ENCODE measurements at regions of chr11 and their contacts with region 1.

Region 1: GRCh38 chr11:46315033-46315738 is 32.1 kb upstream of the DGKZ start:
- DNase-seq: peak; percentile 95
- ATAC-seq: peak; percentile 97
- H3K4me3 Mint-ChIP-seq: no peak overlapping the region
- H3K27ac Mint-ChIP-seq: no peak overlapping the region
- H3K4me1 Mint-ChIP-seq: peaks cover 6% of the 10 kb centered on the region
- H3K27me3 Mint-ChIP-seq: no peaks in the 10 kb centered on the region; the same call in 1 of the 2 replicates
- CTCF ChIP-seq: peak; percentile 98

Region 2: GRCh38 chr11:46198246-46199240 is 116.6 kb before region 1 on chr11:
- CTCF ChIA-PET with region 1: no interaction called
- POLR2A ChIA-PET with region 1: no interaction called
- DNase-seq: no peak
- ATAC-seq: no peak
- H3K4me3 Mint-ChIP-seq: no peak overlapping the region
- H3K27ac Mint-ChIP-seq: no peak overlapping the region
- H3K4me1 Mint-ChIP-seq: peaks cover 12% of the 10 kb centered on the region
- H3K27me3 Mint-ChIP-seq: peaks cover 6% of the 10 kb centered on the region; the same call in 1 of the 2 replicates
- CTCF ChIP-seq: no peak

Region 3: GRCh38 chr11:46247664-46248063 is 67.5 kb before region 1 on chr11:
- CTCF ChIA-PET with region 1: interaction called, 42 read pairs
- POLR2A ChIA-PET with region 1: interaction called, 5 read pairs
- DNase-seq: peak; percentile 75
- ATAC-seq: peak; percentile 48
- H3K4me3 Mint-ChIP-seq: no peak overlapping the region
- H3K27ac Mint-ChIP-seq: peak overlapping the region; percentile 33
- H3K4me1 Mint-ChIP-seq: peaks cover 27% of the 10 kb centered on the region
- H3K27me3 Mint-ChIP-seq: peaks cover 2% of the 10 kb centered on the region; the same call in 1 of the 2 replicates
- CTCF ChIP-seq: peak; percentile 32; the same call in 1 of the 2 replicates

Region 4: DNA sequence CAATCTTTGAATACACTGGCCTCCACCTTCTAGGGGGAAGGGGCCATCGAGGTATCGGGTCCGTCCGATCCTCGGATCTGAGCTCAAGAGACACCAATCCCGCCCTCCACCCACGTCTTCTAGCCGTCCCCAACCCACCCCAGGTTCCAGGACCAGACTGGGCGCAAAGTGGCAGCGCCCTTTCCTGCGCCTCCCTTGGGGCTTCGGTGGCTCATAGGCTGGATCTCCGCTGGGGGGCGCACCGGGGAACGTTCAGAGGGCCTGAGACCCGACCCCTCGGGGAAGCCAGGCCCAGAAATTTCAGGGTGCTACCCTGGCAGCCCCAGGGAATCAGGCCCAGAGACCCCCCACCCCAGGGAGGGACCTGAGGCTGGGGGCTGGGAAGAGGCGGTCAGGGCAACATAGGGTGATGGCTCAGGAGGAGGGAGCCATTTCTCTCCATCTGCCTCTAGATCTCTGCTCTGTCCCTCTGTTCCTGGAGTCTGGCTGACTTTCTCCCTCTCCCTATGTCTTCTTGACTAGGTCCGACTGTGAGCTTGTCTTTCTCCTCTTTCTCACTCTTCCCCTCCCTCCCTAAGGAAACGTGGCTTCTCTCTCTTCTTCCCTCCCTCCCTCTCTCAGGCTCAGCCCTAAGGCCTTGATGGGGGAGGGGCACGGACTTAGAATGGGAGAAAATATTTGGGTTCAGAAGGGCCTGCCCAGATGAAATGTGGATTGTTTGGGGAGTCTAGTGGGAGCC is 36.6 kb before region 1 on chr11:
- CTCF ChIA-PET with region 1: interaction called, 42 read pairs
- POLR2A ChIA-PET with region 1: interaction called, 3 read pairs
- DNase-seq: peak; percentile 83
- ATAC-seq: peak; percentile 68
- H3K4me3 Mint-ChIP-seq: peak overlapping the region; percentile 79
- H3K27ac Mint-ChIP-seq: peak overlapping the region; percentile 26
- H3K4me1 Mint-ChIP-seq: peaks cover 41% of the 10 kb centered on the region
- H3K27me3 Mint-ChIP-seq: peaks cover 10% of the 10 kb centered on the region
- CTCF ChIP-seq: peak; percentile 53

Region 5: DNA sequence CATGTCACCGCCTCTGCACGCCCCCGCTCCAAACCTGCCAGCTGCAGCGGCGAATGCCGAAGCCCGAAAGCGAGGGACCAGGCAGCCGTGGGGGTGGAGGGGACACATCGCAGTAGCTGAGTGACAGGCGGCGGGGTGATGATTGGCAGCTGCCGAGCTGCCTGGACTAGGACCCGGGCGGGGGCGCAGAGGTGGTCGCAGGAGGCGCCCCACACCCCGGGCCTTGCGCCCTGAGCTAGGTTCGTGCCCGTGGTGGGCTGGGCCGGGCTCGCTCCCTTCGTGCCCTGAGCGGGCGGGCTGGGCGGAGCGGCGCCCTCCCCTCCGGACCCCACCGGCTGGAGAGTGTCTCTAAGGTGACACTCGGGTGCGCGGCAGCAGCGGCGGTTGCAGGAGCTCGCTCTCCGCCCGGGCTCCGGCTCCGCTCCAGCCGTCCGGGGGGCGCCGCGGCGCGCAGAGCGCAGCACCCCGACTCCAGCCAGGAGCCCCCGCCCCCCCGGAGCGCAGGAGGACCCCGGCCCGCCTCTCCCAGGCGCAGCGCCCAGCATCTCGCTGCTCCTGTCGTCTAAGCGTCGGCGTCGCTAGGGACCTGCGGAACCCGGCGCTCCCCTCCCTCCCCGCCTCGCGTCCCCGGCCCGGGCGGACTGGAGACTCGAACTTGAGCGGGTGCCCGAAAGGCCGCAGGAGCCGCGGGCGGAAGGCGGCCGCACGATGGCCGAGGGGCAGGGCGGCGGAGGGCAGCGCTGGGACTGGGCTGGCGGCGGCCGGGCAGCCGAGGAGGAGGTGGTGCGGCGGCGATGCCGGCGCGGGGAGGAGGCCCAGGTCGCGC is 17.6 kb after region 1 on chr11:
- CTCF ChIA-PET with region 1: interaction called, 26 read pairs
- POLR2A ChIA-PET with region 1: interaction called, 4 read pairs
- DNase-seq: peak; percentile 55
- ATAC-seq: peak; percentile 54
- H3K4me3 Mint-ChIP-seq: peak overlapping the region; percentile 69
- H3K27ac Mint-ChIP-seq: no peak overlapping the region
- H3K4me1 Mint-ChIP-seq: peaks cover 67% of the 10 kb centered on the region
- H3K27me3 Mint-ChIP-seq: peaks cover 56% of the 10 kb centered on the region
- CTCF ChIP-seq: no peak

Region 6: GRCh38 chr11:46338988-46339666 is 23.9 kb after region 1 on chr11:
- CTCF ChIA-PET with region 1: interaction called, 23 read pairs
- POLR2A ChIA-PET with region 1: interaction called, 4 read pairs
- DNase-seq: peak; percentile 83
- ATAC-seq: peak; percentile 89
- H3K4me3 Mint-ChIP-seq: peak overlapping the region; percentile 60
- H3K27ac Mint-ChIP-seq: peak overlapping the region; percentile 99
- H3K4me1 Mint-ChIP-seq: peaks cover 96% of the 10 kb centered on the region
- H3K27me3 Mint-ChIP-seq: peaks cover 9% of the 10 kb centered on the region
- CTCF ChIP-seq: no peak

Region 7: DNA sequence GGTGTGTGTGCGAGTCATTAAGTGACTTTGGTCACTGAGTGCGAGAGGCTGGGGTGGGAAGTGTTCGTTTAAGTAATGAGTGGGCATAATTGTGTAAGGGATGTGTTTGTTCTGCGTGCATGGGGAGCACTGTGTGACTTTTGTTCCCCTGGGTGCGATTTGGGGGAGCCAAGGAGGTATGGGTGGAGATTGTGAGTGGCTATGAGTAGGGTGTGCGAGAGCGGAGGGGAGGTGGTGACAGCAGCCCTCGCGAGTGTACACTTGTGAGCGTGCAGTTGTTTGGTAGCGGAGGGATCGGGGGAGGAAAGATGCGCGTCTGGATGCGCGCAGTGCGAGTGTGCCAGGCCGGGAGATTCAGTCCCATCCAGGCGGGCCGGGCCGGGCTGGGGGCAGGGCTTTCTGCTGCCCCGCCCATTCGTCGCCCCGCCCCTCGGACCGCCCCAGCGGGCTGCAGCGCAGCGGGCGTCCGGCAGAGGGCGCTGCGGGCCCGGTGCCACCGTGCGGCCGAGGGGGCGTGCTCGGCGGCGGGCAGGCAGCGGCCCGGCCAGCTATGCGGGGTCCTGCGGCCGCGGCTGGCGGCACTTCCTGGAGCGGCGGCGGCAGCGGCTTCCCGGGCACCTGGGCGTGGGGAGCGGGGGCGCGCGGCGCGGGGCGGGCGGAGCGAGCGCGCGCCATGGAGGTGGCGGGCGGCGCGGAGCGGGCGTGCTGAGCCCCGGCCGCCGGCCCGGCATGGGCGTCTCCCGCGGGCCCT is 31.9 kb after region 1 on chr11 and contains the start of gene DGKZ:
- CTCF ChIA-PET with region 1: interaction called, 22 read pairs
- POLR2A ChIA-PET with region 1: no interaction called
- DNase-seq: peak; percentile 81
- ATAC-seq: peak; percentile 77
- H3K4me3 Mint-ChIP-seq: peak within 1 kb of the TSS; percentile 77
- H3K27ac Mint-ChIP-seq: no peak within 1 kb of the TSS; the same call in 1 of the 2 replicates
- H3K4me1 Mint-ChIP-seq: peaks cover 86% of the 10 kb centered on the region
- H3K27me3 Mint-ChIP-seq: peaks cover 11% of the 10 kb centered on the region
- CTCF ChIP-seq: peak; percentile 80
- total RNA-seq, gene DGKZ: 107 to 139 TPM (median 115 TPM) in 3 replicates

Region 8: DNA sequence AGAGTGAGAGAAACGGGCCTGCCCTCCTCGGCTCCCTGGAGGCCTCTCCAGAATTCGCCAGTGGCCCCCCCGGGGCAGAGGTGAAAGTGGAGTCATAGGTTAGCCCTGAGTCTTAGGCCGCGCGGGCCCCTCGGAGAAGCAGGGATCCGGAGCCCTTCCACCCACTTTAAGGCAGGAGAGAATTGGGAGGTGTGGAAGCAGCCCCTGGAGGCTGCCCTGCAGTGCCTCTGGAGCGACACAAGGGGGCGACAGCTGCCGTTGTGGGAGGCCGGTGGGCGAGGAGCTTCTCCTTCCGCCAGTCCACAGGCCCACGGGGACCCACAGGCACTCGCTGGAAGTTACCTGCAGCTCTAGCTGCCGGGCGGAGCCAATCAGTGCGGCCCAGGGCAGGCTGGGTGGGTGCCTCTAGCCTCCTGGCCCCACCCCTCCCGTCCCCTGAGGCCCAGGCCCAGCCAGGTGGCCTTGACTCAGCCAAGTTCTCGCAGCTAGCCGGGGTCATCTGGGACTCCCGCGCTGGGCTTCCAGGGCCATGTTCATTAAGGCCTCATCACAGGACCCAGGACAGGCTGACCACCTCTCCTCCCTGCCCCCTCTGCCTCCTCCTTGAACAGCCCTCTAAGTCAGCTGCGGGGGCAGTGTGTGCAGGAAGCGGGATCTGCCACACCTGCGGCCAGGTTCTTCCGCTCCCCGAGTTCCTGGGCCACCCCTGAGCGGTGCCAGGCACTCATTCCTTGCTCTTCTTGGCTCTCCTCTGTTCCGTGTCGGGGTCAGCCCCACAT is 37.1 kb after region 1 on chr11:
- CTCF ChIA-PET with region 1: interaction called, 15 read pairs
- POLR2A ChIA-PET with region 1: no interaction called
- DNase-seq: peak; percentile 86
- ATAC-seq: peak; percentile 77
- H3K4me3 Mint-ChIP-seq: peak overlapping the region; percentile 30
- H3K27ac Mint-ChIP-seq: peak overlapping the region; percentile 89
- H3K4me1 Mint-ChIP-seq: peaks cover 64% of the 10 kb centered on the region
- H3K27me3 Mint-ChIP-seq: no peaks in the 10 kb centered on the region
- CTCF ChIP-seq: peak; percentile 98

Region 9: DNA sequence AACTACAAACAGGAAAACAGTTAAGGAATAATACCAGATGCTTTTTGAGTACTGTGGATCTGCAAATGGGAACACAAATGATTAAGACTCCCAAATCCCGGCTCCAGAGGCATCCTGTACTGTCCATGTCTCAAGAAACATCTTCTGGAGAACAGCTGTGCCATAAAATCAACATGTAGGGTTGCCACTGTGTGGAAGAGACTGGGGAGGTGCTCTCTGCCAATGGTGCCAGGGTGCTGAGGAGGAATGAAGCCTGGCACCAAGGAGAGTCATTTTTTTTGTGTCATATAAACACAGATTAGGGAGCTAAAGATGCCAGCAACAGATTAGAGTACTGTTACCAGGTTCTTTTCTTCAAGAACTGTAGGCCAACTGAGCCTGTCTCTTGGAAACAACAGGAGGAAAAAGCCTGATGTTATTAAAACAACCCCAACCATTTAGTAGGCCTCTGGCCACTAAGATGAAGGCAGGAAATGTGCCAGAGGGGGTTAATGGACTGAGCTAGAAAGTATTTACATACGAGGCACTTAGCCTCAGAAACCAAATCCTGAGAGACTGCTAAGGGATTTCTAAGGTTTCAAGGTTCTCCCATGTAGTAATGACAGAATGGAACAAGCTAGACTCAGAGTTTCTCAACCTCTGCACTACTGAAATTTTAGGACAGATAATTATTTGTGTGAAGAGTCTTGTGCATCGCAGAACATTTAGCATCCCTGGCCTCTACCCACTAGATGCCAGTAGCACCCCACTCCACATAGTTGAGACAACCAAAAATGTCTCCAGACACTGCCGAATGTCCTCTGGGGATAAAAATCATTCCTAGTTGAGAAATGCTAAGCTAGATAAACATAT is 131.0 kb after region 1 on chr11:
- CTCF ChIA-PET with region 1: no interaction called
- POLR2A ChIA-PET with region 1: no interaction called
- DNase-seq: no peak
- ATAC-seq: peak; percentile 92
- H3K4me3 Mint-ChIP-seq: no peak overlapping the region
- H3K27ac Mint-ChIP-seq: no peak overlapping the region
- H3K4me1 Mint-ChIP-seq: peaks cover 24% of the 10 kb centered on the region
- H3K27me3 Mint-ChIP-seq: peaks cover 11% of the 10 kb centered on the region
- CTCF ChIP-seq: no peak

Measured in WTC11 (cell line).